ENCODE measurements at regions of chr1 and their contacts with region 1.

Region 1: DNA sequence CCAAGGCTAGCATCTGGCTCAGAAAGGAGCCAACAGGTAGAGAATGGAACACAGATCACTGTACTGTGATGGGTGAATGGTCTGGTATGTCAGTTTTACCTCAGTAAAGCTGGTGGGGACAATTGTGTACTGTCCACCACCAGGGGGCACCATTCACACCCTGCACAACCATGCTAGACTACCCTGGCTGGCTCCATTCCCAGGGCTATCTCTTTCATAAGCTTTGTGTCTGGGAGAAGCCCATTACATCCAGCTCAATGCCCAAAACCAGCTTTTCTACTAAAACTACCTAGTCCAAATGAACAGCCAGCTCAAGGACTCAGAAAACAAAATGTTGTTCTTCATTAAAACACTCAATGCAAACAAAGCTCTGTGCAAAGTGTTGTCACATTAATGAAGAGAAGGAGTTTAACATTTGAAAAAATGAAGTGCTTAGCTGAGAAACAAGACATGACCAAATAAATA is 62.0 kb upstream of the RASAL2 start:
- DNase-seq: peak; percentile 91 to 92
- ATAC-seq: peak; percentile 94
- H3K4me3 ChIP-seq: no peak overlapping the region
- H3K27ac ChIP-seq: no peak overlapping the region
- H3K4me1 ChIP-seq: no peaks in the 10 kb centered on the region
- H3K27me3 ChIP-seq: no peaks in the 10 kb centered on the region

Region 2: DNA sequence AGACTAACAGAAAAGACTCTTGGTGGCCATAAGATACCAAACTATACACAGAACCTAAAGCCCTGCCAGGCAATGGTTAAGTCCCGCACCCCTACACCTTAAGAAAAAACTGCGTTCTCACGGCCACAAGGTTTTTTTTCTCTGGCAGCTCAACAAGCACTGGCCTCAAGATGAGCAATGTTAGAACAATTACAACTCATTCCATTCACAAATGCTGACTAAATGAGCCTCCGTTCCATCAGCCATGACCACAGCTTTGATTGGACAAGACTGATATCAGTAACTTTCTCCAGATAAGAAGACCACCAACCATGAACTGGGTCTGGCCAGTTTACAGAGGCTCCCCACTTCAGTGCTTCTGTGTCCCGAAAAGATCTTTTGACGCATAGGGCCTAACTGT is 94.0 kb before region 1 on chr1:
- intact Hi-C with region 1: no loop called
- DNase-seq: no peak
- ATAC-seq: no peak
- H3K4me3 ChIP-seq: no peak overlapping the region
- H3K27ac ChIP-seq: no peak overlapping the region
- H3K4me1 ChIP-seq: no peaks in the 10 kb centered on the region
- H3K27me3 ChIP-seq: no peaks in the 10 kb centered on the region

Region 3: DNA sequence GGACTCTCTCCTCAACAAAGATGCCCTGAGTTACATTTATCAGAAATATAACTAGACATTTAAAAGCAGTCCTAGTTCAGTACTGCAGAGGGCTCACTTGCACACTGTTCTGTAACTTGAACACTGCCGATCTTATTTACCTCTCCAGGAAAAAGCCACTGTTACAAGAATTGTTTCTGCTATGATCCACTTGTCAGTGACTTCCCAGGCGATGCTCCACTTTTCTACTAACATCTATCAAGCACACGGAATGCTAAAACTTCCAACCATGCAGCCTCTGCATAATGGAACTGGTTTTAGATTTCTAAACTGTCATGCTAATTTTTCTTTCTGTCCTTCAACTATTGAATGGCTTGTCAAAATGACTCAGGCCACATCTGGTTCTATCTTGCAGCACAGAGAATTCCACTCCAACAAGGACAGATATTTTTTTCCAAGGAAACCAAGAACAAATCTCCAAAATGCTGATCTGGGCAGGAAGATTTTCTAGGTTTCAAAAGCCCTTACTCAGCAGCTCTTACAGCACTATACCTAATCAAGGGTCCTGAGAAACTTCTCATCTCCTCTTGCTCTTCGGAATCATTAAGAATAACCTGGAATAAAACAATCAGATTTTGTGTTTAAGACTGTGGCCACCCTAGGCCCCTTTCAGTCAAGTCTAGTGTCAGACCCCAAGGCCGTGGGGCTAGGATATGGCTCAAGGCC is 71.9 kb before region 1 on chr1:
- intact Hi-C with region 1: no loop called
- DNase-seq: no peak
- ATAC-seq: no peak
- H3K4me3 ChIP-seq: no peak overlapping the region
- H3K27ac ChIP-seq: no peak overlapping the region
- H3K4me1 ChIP-seq: no peaks in the 10 kb centered on the region
- H3K27me3 ChIP-seq: no peaks in the 10 kb centered on the region

Region 4: GRCh38 chr1:177996957-177997356 is 34.9 kb before region 1 on chr1:
- intact Hi-C with region 1: no loop called
- DNase-seq: no peak
- ATAC-seq: peak; percentile 11
- H3K4me3 ChIP-seq: no peak overlapping the region
- H3K27ac ChIP-seq: no peak overlapping the region
- H3K4me1 ChIP-seq: no peaks in the 10 kb centered on the region
- H3K27me3 ChIP-seq: no peaks in the 10 kb centered on the region

Region 5: DNA sequence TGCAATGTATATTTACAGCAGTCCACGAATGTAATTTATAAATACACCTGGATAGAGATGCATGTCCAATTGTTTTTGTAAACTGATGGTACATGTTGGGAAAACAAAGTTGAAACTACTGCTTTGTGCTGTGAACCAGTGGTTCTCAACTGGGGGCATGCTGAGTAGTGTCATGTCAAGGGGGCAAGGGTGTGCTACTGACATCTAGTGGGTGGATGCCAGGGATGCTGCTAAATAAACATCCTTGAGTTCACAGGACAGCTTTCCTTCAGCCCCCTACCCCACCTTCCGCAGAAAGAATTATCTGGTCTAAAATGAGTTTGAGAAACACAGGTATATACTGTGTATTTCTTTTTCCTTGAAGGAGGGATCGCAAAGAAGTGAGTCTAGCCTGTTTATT is 157.9 kb after region 1 on chr1:
- intact Hi-C with region 1: loop called in 1 of 2 experiments (anchors 10 kb)
- DNase-seq: no peak
- ATAC-seq: no peak
- H3K4me3 ChIP-seq: no peak overlapping the region
- H3K27ac ChIP-seq: no peak overlapping the region
- H3K4me1 ChIP-seq: peaks cover 2% of the 10 kb centered on the region in 2 donors
- H3K27me3 ChIP-seq: no peaks in the 10 kb centered on the region

Region 6: GRCh38 chr1:178282949-178283367 is 251.1 kb after region 1 on chr1:
- intact Hi-C with region 1: loop called (anchors 5 kb)
- DNase-seq: no peak
- ATAC-seq: no peak
- H3K4me3 ChIP-seq: no peak overlapping the region
- H3K27ac ChIP-seq: no peak overlapping the region
- H3K4me1 ChIP-seq: no peaks in the 10 kb centered on the region
- H3K27me3 ChIP-seq: no peaks in the 10 kb centered on the region

Measured in aorta (tissue), 5 donors.